Body of pancreas (tissue), 4 donors: ENCODE measurements at regions of chr1 and their contacts with region 1.

Region 1: GRCh38 chr1:206030714-206031113 is 7.0 kb upstream of the CTSE start:
- DNase-seq: peak; percentile 72 to 87 (median 82)
- ATAC-seq: peak; percentile 96
- H3K4me3 ChIP-seq: no peak overlapping the region
- H3K27ac ChIP-seq: no peak overlapping the region
- H3K4me1 ChIP-seq: no peaks in the 10 kb centered on the region
- H3K27me3 ChIP-seq: no peaks in the 10 kb centered on the region
- CTCF ChIP-seq: peak; percentile 70 to 92 (median 83)
- POLR2A ChIP-seq: no peak

Region 2: DNA sequence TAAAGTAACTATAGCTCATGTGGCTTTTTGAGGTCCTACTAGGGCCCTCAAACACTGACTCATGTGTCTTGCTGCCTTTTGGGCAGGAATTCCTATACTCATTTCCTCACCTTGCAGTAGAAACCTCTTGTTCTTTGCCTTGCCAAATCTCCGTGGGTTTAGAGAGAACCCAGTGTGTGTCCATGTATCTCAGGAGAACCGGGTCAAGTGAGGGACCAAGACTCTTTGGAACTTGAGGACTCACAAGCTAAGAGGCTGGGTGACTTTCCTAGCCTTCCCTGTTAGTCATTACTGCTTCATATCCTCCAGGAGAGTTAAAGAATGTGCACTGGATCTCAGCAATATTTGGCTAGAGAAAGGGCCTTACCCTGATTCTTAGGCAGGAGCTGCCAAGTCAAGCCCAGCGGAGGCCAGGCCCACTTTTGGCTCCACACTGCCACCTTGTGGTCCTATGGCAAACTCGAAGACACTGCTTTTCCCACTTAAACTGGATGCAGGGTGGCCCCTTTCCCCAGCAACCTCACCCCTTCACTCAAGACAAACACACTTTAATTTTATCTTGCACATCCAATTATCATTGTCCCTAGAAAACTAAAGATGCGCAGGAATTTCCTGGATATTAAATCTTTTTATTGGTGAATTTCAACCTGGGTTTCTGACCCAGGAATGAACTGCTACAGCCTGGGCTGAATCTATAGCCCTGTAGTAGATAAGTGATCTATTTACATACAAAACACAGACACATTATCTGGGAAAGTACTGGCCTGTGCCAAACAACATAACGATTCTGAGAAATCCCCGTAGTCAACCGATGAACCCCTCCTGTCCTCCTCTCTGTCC is 75.8 kb after region 1 on chr1:
- intact Hi-C with region 1: loop called (anchors 5 kb)
- DNase-seq: peak; percentile 81 to 84 (median 82)
- ATAC-seq: peak; percentile 81
- H3K4me3 ChIP-seq: no peak overlapping the region
- H3K27ac ChIP-seq: no peak overlapping the region
- H3K4me1 ChIP-seq: peaks cover 6% of the 10 kb centered on the region
- H3K27me3 ChIP-seq: no peaks in the 10 kb centered on the region
- CTCF ChIP-seq: peak; percentile 76 to 89 (median 85)
- POLR2A ChIP-seq: no peak